ENCODE measurements at regions of chr15 and their contacts with region 1.

Region 1: GRCh38 chr15:96356494-96357455 is 26.3 kb downstream of the NR2F2 start:
- DNase-seq: no peak
- ATAC-seq: peak; percentile 82
- H3K4me3 ChIP-seq: peak overlapping the region; percentile 55 to 58
- H3K27ac ChIP-seq: peak overlapping the region; percentile 78
- H3K4me1 ChIP-seq: peaks cover 16% of the 10 kb centered on the region
- H3K27me3 ChIP-seq: no peaks in the 10 kb centered on the region
- CTCF ChIP-seq: peak; percentile 98

Region 2: DNA sequence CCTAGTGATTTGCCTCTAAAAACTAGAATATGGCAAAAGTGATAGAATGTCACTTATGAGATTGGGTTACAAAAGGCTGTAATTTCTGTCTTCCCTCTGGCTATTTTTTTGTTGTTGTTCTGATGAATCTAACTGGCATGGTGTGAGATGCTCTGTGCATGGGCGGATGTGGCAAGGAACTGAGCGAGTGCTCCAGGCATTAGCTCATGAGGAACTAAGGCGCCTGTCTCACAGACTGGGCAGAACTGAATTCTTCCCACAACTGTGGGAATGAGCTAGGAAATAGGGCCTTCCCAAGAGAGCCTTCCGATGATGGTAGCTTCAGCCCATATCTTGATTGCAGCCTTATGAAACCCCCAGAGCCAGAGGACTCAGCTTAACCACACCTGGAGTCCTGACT is 196.2 kb after region 1 on chr15:
- CTCF ChIA-PET with region 1: no interaction called
- POLR2A ChIA-PET with region 1: interaction called, 17 read pairs
- in situ Hi-C with region 1: no loop called
- intact Hi-C with region 1: no loop called
- DNase-seq: no peak
- ATAC-seq: no peak
- H3K4me3 ChIP-seq: no peak overlapping the region
- H3K27ac ChIP-seq: no peak overlapping the region
- H3K4me1 ChIP-seq: no peaks in the 10 kb centered on the region
- H3K27me3 ChIP-seq: no peaks in the 10 kb centered on the region
- CTCF ChIP-seq: no peak

Region 3: GRCh38 chr15:96585484-96586386 is 229.0 kb after region 1 on chr15:
- CTCF ChIA-PET with region 1: no interaction called
- POLR2A ChIA-PET with region 1: no interaction called
- in situ Hi-C with region 1: no loop called
- intact Hi-C with region 1: loop called (anchors 5 kb)
- DNase-seq: no peak
- ATAC-seq: no peak
- H3K4me3 ChIP-seq: no peak overlapping the region
- H3K27ac ChIP-seq: no peak overlapping the region
- H3K4me1 ChIP-seq: no peaks in the 10 kb centered on the region
- H3K27me3 ChIP-seq: no peaks in the 10 kb centered on the region
- CTCF ChIP-seq: peak; percentile 67

Region 4: DNA sequence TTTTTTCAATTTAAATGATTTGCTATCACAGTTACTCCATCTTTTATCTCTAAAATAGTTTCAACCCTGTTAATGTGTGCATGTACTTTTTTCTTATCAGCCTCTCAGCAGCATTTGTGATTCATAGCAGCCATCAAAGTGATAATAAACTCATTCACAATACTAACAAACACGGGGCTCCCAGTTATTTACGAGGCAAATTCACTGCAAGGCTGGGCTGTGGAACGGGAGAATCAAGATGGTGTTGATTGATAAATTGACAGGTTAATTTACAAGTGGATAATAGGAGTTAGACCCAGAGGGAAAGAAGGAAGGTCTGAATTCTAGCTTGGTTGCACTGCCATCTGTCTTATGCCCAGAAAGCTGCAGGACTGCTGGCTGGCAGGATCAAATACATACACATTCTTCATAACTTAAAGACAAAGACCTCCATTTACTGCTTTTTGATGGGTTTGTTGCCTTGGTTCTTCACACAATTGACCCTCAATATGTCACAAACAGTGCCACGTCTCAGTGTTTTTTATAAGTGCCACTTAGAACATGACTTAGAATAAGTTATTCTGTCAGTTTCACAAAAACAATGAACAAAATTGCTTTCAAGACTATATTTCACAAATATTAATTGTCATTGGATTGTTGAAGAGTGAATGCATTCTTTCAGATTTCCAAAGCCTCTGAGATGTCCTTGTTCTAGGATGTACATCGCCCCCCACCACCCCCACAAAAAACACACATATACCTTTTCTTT is 536.6 kb after region 1 on chr15:
- CTCF ChIA-PET with region 1: interaction called, 4 read pairs
- POLR2A ChIA-PET with region 1: no interaction called
- in situ Hi-C with region 1: no loop called
- intact Hi-C with region 1: loop called (anchors 5 kb)
- DNase-seq: no peak
- ATAC-seq: peak; percentile 88
- H3K4me3 ChIP-seq: no peak overlapping the region
- H3K27ac ChIP-seq: no peak overlapping the region
- H3K4me1 ChIP-seq: no peaks in the 10 kb centered on the region
- H3K27me3 ChIP-seq: no peaks in the 10 kb centered on the region
- CTCF ChIP-seq: peak; percentile 82

Region 5: DNA sequence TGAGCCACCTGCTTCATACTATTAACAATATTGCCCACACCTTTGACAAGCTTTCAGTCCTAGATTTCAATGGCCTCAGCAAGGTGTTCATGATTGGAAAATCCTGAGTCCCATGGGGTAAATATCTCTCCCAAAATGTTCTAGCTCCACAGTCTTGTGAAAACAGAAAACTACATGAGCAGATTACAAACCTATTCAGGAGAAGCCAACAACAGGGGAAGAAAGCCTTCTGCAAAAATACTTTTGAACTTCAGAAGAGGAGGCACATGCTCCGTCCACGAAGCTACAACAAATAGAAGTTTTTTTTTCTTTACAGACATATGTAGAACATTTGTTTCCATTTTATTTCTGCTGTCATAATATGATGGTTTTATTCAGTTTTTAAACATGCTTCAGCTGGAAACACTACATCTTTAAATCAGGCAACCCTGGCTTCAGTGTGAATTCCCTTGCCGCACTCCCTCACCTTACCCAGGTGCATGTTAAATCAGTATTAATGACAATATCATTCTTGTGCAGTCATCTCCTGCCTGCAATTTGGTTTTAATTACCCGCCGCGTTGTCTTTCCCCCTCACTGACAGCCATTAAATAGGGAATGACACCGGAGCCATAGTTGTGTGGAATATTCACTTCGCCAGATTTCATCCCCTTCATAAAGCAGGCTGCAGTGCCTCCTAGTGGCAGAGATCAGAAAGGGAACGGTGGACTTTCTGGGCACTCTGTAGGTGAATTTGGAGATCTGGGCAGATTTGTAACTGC is 878.3 kb after region 1 on chr15:
- CTCF ChIA-PET with region 1: no interaction called
- POLR2A ChIA-PET with region 1: interaction called, 9 read pairs
- in situ Hi-C with region 1: no loop called
- intact Hi-C with region 1: loop called (anchors 1 kb)
- DNase-seq: peak; percentile 38
- ATAC-seq: peak; percentile 92
- H3K4me3 ChIP-seq: peak overlapping the region in 1 of 2 experiments; percentile 18; a peak in 1 of 4 replicates
- H3K27ac ChIP-seq: no peak overlapping the region
- H3K4me1 ChIP-seq: peaks cover 6% of the 10 kb centered on the region; the same call in 1 of the 2 replicates
- H3K27me3 ChIP-seq: no peaks in the 10 kb centered on the region
- CTCF ChIP-seq: peak; percentile 92

Region 6: GRCh38 chr15:97759363-97759762 is 1402.6 kb after region 1 on chr15:
- CTCF ChIA-PET with region 1: no interaction called
- POLR2A ChIA-PET with region 1: no interaction called
- in situ Hi-C with region 1: no loop called
- intact Hi-C with region 1: loop called (anchors 5 kb)
- DNase-seq: no peak
- ATAC-seq: no peak
- H3K4me3 ChIP-seq: no peak overlapping the region
- H3K27ac ChIP-seq: no peak overlapping the region
- H3K4me1 ChIP-seq: no peaks in the 10 kb centered on the region
- H3K27me3 ChIP-seq: no peaks in the 10 kb centered on the region; the same call in 1 of the 2 replicates
- CTCF ChIP-seq: no peak